ENCODE measurements at regions of chr5 and their contacts with region 1.

Region 1: DNA sequence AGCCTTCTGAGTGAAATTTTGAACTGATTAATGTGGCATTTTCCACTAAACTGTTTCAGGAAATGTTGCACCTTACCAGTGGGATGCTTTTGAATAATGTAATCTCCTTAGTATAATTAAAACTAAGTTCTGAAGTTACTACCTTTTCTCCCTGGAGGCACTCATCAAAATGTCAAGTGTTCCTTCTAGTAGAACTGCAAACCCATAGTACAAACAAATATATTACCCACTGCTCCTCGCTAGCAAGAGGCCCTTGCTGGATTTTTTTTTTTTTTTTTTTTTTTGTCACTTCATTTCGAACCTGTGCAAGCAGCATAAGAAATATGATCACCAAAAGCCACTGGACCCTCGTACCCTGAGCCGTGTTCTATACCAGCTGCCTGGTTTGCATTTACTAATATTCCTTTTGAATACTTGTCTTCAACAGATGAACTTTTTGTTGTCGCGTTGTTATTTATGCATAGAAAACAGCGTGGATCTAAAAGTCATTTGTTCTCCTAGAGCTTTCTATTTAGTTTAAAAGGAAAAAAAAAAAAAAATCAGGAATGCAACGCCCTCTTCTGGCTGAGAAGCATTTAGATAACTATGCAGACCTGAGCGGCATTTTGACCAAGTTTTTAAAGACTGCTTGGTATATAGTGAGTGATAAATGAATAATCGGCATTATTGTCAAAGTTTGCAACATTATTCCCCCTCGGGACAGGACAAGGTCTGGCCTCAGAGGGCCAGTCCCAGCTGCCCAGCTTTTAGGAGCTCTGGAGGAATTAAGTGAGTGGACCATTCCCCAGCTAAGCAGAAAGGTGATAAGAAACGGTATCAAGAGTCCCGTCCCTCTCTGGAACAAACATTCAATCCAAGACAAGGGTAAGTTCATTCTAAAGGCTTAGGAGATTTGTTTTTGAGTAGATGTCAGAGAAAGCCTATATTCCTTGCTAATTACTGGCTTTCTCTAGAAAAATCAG is 162.5 kb upstream of the KIF2A start:
- DNase-seq: no peak
- H3K4me3 ChIP-seq: peak overlapping the region in 38 of 59 donors; percentile 1 to 51 (median 29)
- H3K27ac ChIP-seq: peak overlapping the region in 12 of 59 donors; percentile 3 to 69 (median 24)
- H3K27me3 ChIP-seq: peaks cover 0 to 2% (median 0%) of the 10 kb centered on the region in 45 donors
- CTCF ChIP-seq: peak; percentile 37 to 80 (median 70)

Region 2: GRCh38 chr5:61831736-61832135 is 311.8 kb before region 1 on chr5:
- intact Hi-C with region 1: loop called in 1 of 2 experiments (anchors 10 kb)
- DNase-seq: no peak
- H3K4me3 ChIP-seq: no peak overlapping the region
- H3K27ac ChIP-seq: no peak overlapping the region
- H3K27me3 ChIP-seq: no peaks in the 10 kb centered on the region
- CTCF ChIP-seq: no peak

Region 3: DNA sequence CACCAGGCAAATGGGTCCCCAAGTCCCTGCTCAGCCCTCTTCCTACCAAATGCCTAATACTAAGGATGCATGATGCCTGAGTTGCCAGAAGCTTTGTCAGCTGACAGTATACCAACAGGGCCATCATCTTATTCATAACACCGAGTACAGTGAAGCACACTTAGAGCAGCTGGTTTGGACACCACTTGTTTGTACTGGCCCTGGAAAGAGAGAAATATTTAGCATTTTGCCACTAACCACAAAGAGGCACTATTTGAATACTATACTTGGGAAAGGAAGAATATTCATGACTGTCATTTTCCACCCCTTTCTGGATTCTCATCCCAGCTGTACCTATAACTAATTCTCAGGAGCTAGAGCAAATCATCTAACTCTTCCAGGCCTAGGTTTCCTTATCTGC is 201.9 kb before region 1 on chr5:
- intact Hi-C with region 1: loop called in 1 of 2 experiments (anchors 2 kb)
- DNase-seq: no peak
- H3K4me3 ChIP-seq: no peak overlapping the region
- H3K27ac ChIP-seq: no peak overlapping the region
- H3K27me3 ChIP-seq: no peaks in the 10 kb centered on the region
- CTCF ChIP-seq: peak in 25 of 56 donors; percentile 9 to 52 (median 24)

Measured in dorsolateral prefrontal cortex (tissue), 120 donors.